OCI-LY7 (cell line): ENCODE measurements at regions of chr15 and their contacts with region 1.

Region 1: GRCh38 chr15:68427366-68427765 is 4.6 kb downstream of the ITGA11 start:
- DNase-seq: peak; percentile 8
- H3K4me3 ChIP-seq: no peak overlapping the region
- H3K27ac ChIP-seq: no peak overlapping the region
- H3K4me1 ChIP-seq: no peaks in the 10 kb centered on the region
- CTCF ChIP-seq: no peak

Region 2: DNA sequence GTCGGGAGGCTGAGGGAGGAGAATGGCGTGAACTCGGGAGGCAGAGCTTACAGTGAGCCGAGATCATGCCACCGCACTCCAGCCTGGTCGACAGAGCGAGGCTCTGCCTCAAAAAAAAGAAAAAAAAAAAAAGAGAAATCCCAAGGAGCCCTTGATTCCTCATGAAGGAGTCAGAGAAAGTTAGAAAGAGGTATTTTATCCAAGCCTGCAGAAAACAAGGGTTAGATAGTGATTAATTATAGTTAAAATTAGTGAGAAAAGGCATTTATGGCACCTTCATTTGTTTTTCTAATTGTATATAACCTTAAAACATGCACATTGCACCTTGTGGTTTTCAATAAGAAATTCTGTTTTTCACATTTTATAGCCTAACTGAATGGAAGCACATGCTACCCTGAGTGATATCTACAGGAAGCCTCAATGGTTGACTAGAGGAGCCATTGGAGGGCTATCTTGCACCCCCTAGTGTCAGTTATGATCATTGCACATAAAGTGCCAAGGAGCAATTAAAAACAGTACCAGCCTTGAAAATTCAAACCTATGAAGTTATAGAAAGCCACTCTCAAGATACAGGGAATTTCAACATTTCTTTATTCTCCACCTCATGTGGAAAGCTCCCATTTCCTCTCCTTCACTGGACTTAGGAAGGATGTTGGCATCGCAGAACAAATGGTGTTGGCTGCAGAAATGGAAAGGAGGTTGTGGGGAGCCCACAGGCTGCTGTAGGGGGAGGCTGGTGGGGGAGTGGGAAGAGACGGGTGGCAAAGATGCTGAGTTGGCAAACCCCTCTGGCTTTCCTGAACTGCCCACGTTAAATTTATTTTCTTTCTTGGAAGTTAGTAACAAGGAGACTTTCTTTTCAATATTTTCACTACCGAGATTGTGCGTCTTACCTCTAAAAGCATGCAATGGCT is 43.9 kb before region 1 on chr15:
- CTCF ChIA-PET with region 1: no interaction called
- POLR2A ChIA-PET with region 1: no interaction called
- intact Hi-C with region 1: no loop called
- DNase-seq: peak; percentile 63
- H3K4me3 ChIP-seq: no peak overlapping the region
- H3K27ac ChIP-seq: no peak overlapping the region
- H3K4me1 ChIP-seq: peaks cover 10% of the 10 kb centered on the region
- CTCF ChIP-seq: peak; percentile 90

Region 3: DNA sequence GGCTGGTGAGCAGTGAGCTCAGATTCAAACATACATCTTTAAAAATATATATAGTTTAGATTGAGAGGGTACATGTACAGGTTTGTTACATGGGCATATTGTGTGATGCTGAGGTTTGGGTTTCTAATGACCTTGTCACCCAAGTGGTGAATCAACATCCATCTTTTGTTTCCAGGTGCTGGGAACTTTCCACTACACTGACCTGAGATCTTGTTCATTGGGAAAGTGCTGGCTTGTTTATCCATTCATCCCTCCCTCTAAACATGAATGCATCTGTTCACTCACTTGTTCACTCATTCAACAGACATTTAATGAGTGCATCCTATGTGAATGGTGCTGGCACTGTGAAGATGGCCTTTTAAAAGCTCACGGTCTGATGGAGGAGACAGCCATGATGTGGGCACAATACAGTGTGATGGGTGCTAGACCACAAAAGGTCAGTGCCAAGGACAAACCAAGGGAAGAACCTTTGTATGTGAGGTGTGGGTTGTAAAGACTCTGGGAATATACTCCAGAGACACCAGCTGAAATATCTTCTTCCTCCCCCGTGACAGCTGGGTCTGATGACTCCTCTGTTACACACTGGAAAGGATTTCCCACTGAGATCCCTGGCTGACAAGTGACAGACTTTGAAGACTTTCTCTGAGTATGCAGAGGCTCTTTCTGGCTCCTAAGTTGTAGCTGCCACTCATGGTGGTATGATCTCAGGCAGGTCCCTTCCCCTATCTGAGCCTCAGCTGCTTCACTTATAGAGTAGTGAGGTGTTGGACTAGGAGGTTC is 20.8 kb after region 1 on chr15:
- CTCF ChIA-PET with region 1: no interaction called
- POLR2A ChIA-PET with region 1: interaction called, 11 read pairs
- intact Hi-C with region 1: no loop called
- DNase-seq: no peak
- H3K4me3 ChIP-seq: no peak overlapping the region
- H3K27ac ChIP-seq: no peak overlapping the region
- H3K4me1 ChIP-seq: no peaks in the 10 kb centered on the region
- CTCF ChIP-seq: no peak